HCT116 (cell line): ENCODE measurements at regions of chr13 and their contacts with region 1.

Region 1: GRCh38 chr13:94427313-94427953 is 52.0 kb downstream of the DCT start:
- DNase-seq: no peak
- ATAC-seq: no peak
- H3K4me3 ChIP-seq: no peak overlapping the region
- H3K27ac ChIP-seq: no peak overlapping the region
- H3K4me1 ChIP-seq: no peaks in the 10 kb centered on the region
- H3K27me3 ChIP-seq: 0 out of 2 replicates have a peak, but pooled peaks cover 4% of the 10 kb centered on the region
- CTCF ChIP-seq: no peak
- POLR2A ChIP-seq: no peak
- RAD21 ChIP-seq: no peak

Region 2: GRCh38 chr13:94416454-94417080 is 10.9 kb before region 1 on chr13:
- CTCF ChIA-PET with region 1: interaction called, 16 read pairs
- POLR2A ChIA-PET with region 1: no interaction called
- RAD21 ChIA-PET with region 1: no interaction called
- intact Hi-C with region 1: no loop called
- DNase-seq: peak; percentile 51
- ATAC-seq: peak; percentile 93
- H3K4me3 ChIP-seq: no peak overlapping the region
- H3K27ac ChIP-seq: no peak overlapping the region
- H3K4me1 ChIP-seq: no peaks in the 10 kb centered on the region
- H3K27me3 ChIP-seq: 0 out of 2 replicates have a peak, but pooled peaks cover 4% of the 10 kb centered on the region
- CTCF ChIP-seq: peak; percentile 17 to 82 (median 72); a peak in 5 of 6 replicates
- POLR2A ChIP-seq: no peak
- RAD21 ChIP-seq: peak; percentile 43

Region 3: DNA sequence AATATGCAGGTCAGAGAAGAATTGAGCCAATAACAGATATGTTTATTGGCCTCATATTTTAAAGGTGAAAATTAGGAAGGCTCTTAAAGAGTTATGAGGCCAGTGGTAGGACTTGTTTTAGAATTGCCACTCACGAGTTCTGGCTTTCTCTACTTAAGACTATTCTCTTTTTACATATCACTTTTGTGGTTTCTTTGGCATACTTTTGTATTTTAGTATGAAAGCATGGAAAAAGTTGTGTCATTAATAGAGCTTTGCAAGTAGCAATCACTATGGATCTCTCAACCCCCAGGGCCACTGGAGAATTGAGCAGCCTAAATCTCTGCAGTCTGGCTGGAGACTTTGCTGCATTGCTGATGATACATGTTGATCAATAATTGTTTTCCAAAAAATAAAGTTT is 349.5 kb after region 1 on chr13:
- CTCF ChIA-PET with region 1: no interaction called
- POLR2A ChIA-PET with region 1: no interaction called
- RAD21 ChIA-PET with region 1: no interaction called
- intact Hi-C with region 1: no loop called
- DNase-seq: no peak
- ATAC-seq: no peak
- H3K4me3 ChIP-seq: no peak overlapping the region
- H3K27ac ChIP-seq: no peak overlapping the region
- H3K4me1 ChIP-seq: no peaks in the 10 kb centered on the region
- H3K27me3 ChIP-seq: 0 out of 2 replicates have a peak, but pooled peaks cover 14% of the 10 kb centered on the region
- CTCF ChIP-seq: no peak
- POLR2A ChIP-seq: no peak
- RAD21 ChIP-seq: no peak